Sigmoid colon (tissue), 7 donors: ENCODE measurements at regions of chr1 and their contacts with region 1.

Region 1: GRCh38 chr1:77926561-77927357 is 38.3 kb downstream of the NEXN start:
- DNase-seq: no peak
- H3K4me3 ChIP-seq: peak overlapping the region in 1 of 4 donors; percentile 15
- H3K27ac ChIP-seq: peak overlapping the region in 2 of 4 donors; percentile 33 to 45
- H3K4me1 ChIP-seq: peaks cover 0 to 16% (median 7%) of the 10 kb centered on the region in 4 donors
- H3K27me3 ChIP-seq: no peaks in the 10 kb centered on the region
- CTCF ChIP-seq: no peak
- EP300 ChIP-seq: no peak
- POLR2A ChIP-seq: no peak

Region 2: DNA sequence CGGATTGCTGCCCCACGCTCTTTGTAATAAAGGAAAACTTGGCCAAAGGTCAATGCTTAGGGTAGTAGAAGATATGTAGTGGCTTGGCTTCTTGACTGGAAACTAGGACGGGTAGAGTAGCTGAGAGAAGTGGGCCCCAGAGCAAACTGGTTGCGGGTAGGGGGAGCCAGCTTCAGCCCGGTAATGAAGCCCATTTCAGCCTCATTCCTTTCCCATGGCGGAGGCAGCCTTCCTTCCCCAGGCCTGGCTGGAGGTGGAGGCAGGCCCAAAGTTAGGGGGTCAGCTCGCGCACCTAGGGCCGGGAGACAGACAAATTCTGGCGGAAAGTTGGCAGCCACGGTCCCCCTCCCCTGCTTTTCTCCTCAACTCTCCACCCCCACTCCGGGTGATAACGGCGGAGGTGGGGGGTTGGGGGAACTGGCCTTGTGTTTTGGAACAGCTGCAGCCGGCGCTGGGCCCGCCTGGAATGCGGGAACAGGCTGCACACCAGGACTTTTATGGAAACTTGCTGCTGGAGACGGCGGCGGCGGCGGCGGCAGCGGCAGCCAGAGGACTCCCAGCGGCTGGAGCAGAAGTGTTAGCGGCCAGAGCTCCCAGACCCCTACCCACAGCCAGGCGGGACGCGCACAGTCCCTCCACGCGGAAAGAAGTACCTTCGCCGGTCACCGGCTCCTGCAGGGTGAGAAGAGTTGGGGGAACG is 38.5 kb before region 1 on chr1 and contains the start of gene NEXN:
- intact Hi-C with region 1: no loop called
- DNase-seq: peak; percentile 93
- H3K4me3 ChIP-seq: peak within 1 kb of the TSS; percentile 84 to 92 (median 88)
- H3K27ac ChIP-seq: peak within 1 kb of the TSS; percentile 86 to 98 (median 94)
- H3K4me1 ChIP-seq: peaks cover 0 to 43% (median 24%) of the 10 kb centered on the region in 4 donors
- H3K27me3 ChIP-seq: no peaks in the 10 kb centered on the region
- CTCF ChIP-seq: no peak
- EP300 ChIP-seq: peak in 3 of 4 donors; percentile 41 to 55 (median 45)
- POLR2A ChIP-seq: peak; percentile 38 to 66
- total RNA-seq, gene NEXN: 68.8 to 158 (median 95.3) TPM

Region 3: DNA sequence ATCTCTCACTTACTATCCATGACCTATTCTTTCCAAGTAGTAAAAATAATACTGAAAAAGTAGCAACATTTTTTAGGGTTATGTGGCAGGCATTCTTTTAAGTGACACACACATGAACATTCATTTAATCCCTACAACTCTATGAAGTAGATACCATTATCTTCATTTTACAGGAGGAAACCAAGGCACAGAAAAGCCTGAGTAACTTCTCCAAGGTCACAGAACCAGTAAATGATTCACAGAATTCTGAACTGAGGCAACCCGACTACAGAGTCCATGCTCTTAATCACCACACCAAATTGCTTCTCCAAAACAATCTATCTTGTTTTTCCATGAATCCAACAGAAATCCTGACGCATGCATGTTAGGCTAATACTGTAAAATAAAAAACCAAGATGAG is 34.6 kb after region 1 on chr1:
- intact Hi-C with region 1: loop called (anchors 5 kb)
- DNase-seq: no peak
- H3K4me3 ChIP-seq: no peak overlapping the region
- H3K27ac ChIP-seq: no peak overlapping the region
- H3K4me1 ChIP-seq: no peaks in the 10 kb centered on the region
- H3K27me3 ChIP-seq: no peaks in the 10 kb centered on the region
- CTCF ChIP-seq: no peak
- EP300 ChIP-seq: no peak
- POLR2A ChIP-seq: no peak

Region 4: GRCh38 chr1:78009836-78010235 is 83.1 kb after region 1 on chr1:
- intact Hi-C with region 1: no loop called
- DNase-seq: no peak
- H3K4me3 ChIP-seq: peak overlapping the region in 1 of 4 donors; percentile 4
- H3K27ac ChIP-seq: peak overlapping the region; percentile 13 to 89 (median 24)
- H3K4me1 ChIP-seq: peaks cover 0 to 55% (median 42%) of the 10 kb centered on the region in 4 donors
- H3K27me3 ChIP-seq: no peaks in the 10 kb centered on the region
- CTCF ChIP-seq: no peak
- EP300 ChIP-seq: no peak
- POLR2A ChIP-seq: no peak